ENCODE measurements at regions of chr9 and their contacts with region 1.

Region 1: DNA sequence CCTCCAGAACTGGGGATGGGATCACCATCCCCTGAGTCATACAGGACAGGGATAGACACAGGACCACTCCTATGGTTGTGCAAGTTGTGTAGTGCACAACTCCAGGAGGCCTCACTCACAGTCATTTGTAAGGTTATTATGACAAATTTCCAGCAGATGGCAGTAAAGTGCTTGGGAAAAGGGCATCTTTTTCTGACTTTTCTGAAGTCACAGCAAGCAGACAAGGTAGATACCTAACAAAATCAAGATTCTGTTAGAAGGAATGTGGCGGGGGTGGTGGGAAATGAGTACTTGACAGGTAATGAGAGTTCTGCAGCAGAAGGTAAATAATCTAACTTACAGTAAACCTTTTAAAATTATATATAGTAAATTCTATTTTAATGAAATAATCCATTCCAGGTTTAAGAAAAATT is 16.7 kb upstream of the KIF27 start:
- DNase-seq: no peak
- H3K4me3 ChIP-seq: no peak overlapping the region
- CTCF ChIP-seq: no peak
- POLR2A ChIP-seq: no peak

Region 2: DNA sequence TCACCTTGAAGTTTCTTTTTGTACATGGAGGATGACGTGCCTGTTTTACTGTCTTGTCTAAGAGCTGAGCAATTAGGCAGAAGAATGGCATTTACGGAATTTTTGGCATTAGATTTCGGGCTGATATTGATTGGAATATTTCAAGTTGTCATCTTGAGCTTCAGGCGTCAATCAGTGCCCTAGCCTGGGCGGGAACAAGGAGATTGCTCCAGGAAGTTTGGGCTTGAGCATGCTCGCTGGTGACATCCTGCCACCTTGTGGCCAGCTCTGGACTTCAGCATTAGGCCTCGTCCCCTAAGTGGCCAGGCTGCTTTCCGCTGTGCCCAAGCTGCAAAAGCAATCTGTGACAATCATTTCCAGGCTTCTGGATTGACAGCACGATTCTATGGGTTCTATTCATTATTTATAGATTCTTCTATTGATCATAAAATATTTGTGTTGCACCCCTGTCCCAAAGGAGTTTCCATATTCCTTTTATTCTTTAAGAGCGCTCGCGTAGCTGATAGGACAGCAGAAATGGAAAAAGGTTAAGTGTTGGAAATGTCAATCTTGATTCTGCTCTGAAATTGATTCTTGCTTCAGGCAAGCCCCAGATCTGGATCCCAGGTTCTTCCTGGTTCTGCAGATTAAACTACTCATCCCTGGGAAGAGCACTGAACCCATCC is 323.3 kb after region 1 on chr9:
- intact Hi-C with region 1: loop called (anchors 5 kb)
- DNase-seq: peak; percentile 75 to 96
- H3K4me3 ChIP-seq: no peak overlapping the region
- CTCF ChIP-seq: no peak
- POLR2A ChIP-seq: no peak

Region 3: GRCh38 chr9:84315278-84315877 is 377.5 kb after region 1 on chr9:
- intact Hi-C with region 1: loop called (anchors 5 kb)
- DNase-seq: peak in 1 of 2 donors; percentile 39
- H3K4me3 ChIP-seq: no peak overlapping the region
- CTCF ChIP-seq: no peak
- POLR2A ChIP-seq: no peak

Region 4: DNA sequence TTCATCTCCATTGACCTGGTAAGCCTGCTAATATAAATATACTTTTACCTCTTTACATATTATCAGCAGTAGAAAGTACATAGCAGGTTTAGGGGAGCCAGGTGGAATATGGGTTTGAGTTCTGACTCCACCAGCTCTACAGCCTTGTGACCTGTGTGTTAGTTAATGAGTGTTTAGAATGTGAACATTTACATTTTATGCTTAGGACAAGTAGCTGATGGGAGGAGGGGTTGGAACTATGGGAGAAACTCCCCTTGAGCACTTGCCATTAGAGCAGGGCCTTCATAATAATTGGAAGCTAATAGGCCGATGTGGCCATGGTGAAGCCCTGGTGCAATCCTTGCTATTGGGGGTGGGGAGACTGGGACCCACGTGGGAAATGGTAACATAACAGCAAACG is 583.3 kb after region 1 on chr9:
- intact Hi-C with region 1: loop called (anchors 10 kb)
- DNase-seq: no peak
- H3K4me3 ChIP-seq: no peak overlapping the region
- CTCF ChIP-seq: no peak
- POLR2A ChIP-seq: no peak